ENCODE measurements at regions of chr1 and their contacts with region 1.

Region 1: DNA sequence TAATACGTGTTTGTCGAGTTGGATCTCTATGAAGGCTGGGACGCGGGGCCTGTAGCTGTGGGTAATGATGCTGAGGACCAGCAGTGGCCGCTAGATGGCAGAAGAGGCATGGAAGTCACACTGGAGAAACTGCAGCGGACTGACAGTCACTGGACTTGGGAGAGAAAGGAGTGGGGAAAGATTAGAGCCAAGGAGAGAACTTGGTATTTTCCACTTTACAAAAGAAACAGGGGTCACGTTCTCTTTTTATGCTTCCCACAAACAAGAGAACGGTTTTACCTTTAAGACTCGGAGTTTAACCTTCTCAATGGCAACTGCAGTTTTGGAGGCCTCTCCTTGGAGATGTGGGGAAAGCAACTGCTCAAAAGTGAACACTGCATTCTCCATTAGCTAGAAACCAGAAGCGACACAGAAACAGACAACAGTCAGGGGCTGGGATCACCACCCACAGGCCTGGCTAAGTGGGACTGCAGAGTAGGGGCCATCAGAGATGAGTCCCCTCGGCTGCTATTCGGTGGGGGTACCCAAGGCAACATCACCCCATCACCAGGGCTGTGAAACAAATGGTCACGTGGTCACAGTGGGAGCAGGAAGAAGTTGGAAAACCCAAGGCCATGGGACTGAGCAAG is 51.1 kb upstream of the EDEM3 start:
- DNase-seq: peak; percentile 57 to 95
- H3K4me3 ChIP-seq: no peak overlapping the region
- H3K27ac ChIP-seq: peak overlapping the region; percentile 46 to 51
- H3K4me1 ChIP-seq: peaks cover 2 to 10% of the 10 kb centered on the region in 2 donors
- H3K27me3 ChIP-seq: no peaks in the 10 kb centered on the region
- CTCF ChIP-seq: peak; percentile 84 to 93 (median 92)

Region 2: GRCh38 chr1:184982002-184982954 is 176.5 kb after region 1 on chr1:
- intact Hi-C with region 1: loop called (anchors 1 kb)
- DNase-seq: peak in 1 of 2 donors; percentile 89
- H3K4me3 ChIP-seq: no peak overlapping the region
- H3K27ac ChIP-seq: no peak overlapping the region
- H3K4me1 ChIP-seq: no peaks in the 10 kb centered on the region
- H3K27me3 ChIP-seq: no peaks in the 10 kb centered on the region
- CTCF ChIP-seq: peak; percentile 78 to 94 (median 92)

Region 3: DNA sequence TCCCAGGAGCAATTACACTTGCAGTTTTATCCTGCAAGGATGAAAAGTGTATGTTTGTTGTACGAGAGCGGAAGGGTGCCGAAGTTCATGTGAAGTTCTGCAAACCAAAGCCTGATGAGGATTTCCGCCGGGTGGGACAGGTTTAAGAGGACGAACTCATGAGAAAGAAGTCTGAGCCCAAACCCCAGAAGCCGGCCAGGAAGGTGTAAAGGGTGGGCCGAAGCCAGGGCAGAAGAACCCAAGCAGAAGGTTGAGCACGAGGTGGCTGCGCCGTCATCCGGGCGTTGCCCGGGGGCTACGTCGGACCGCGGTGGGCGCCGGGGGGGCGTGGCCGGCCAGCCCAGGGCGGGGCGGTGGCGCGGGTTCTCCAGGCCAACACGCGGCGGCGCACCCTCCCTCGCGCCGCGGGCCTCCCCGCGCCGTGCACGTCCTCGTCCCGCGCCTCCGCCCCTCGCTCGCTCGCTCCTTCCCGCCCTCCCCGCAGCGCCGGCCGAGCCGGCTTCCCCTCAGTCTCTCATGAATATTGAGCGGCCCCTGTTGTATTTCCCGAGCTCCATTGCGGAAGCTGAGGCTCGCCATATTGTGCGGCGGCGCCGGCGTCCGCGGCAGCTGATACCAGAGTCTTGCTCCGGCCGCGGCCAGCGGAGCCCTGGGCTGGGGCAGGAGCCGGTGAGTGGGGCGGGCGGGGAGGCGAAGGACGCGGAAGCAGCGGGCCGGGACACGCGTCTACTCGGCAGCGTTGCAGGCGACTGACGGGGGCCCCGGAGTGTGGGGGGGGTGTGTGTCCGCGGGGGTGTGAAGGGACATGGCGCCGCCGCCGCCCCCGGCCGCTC is 239.4 kb after region 1 on chr1 and contains the start of gene RNF2:
- intact Hi-C with region 1: loop called (anchors 5 kb)
- DNase-seq: peak; percentile 41 to 88
- H3K4me3 ChIP-seq: peak within 1 kb of the TSS; percentile 73 to 87
- H3K27ac ChIP-seq: peak within 1 kb of the TSS; percentile 82 to 88
- H3K4me1 ChIP-seq: peaks cover 0 to 18% of the 10 kb centered on the region in 2 donors
- H3K27me3 ChIP-seq: no peaks in the 10 kb centered on the region
- CTCF ChIP-seq: no peak
- total RNA-seq, gene RNF2: 4.0 TPM